Uterus (tissue), 4 donors: ENCODE measurements at regions of chr3 and their contacts with region 1.

Region 1: GRCh38 chr3:189148081-189148507 is 23.7 kb upstream of the TPRG1 start:
- DNase-seq: peak; percentile 70 to 80
- H3K4me3 ChIP-seq: no peak overlapping the region
- H3K27ac ChIP-seq: peak overlapping the region; percentile 66 to 67
- H3K4me1 ChIP-seq: peaks cover 13 to 15% of the 10 kb centered on the region in 2 donors
- H3K27me3 ChIP-seq: no peaks in the 10 kb centered on the region
- CTCF ChIP-seq: peak; percentile 75 to 87 (median 86)
- POLR2A ChIP-seq: no peak

Region 2: GRCh38 chr3:188890572-188891270 is 257.4 kb before region 1 on chr3:
- intact Hi-C with region 1: no loop called
- DNase-seq: no peak
- H3K4me3 ChIP-seq: no peak overlapping the region
- H3K27ac ChIP-seq: no peak overlapping the region
- H3K4me1 ChIP-seq: no peaks in the 10 kb centered on the region
- H3K27me3 ChIP-seq: no peaks in the 10 kb centered on the region
- CTCF ChIP-seq: no peak
- POLR2A ChIP-seq: no peak

Region 3: GRCh38 chr3:188962253-188963247 is 185.5 kb before region 1 on chr3:
- intact Hi-C with region 1: loop called (anchors 10 kb)
- DNase-seq: no peak
- H3K4me3 ChIP-seq: no peak overlapping the region
- H3K27ac ChIP-seq: peak overlapping the region; percentile 51 to 66
- H3K4me1 ChIP-seq: peaks cover 0 to 3% of the 10 kb centered on the region in 2 donors
- H3K27me3 ChIP-seq: no peaks in the 10 kb centered on the region
- CTCF ChIP-seq: no peak
- POLR2A ChIP-seq: no peak